CD14-positive monocyte (primary cell): ENCODE measurements at regions of chr17 and their contacts with region 1.

Region 1: DNA sequence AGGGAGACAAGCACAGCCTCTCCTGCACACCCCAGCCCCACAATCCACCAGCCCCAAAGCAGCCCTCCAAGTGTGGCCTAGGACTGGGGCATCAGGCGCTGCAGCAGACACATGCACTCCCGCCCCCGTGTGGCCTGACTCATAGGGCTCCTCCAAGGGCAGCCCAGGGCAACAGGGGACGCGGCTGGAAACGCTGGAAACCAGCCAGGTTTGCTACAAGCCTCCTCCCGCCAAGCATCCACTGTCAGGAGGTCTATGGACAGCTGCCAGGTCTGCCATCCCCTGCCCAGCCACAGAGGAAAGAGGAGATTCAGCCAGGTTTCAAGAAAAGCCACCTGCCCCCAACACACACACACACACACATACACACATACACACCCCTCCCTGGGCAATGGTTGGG is 25.8 kb downstream of the SRCIN1 start:
- DNase-seq: no peak
- H3K4me3 ChIP-seq: no peak overlapping the region
- H3K4me3 Mint-ChIP-seq: peak overlapping the region in 1 of 2 donors; percentile 84
- H3K27ac ChIP-seq: no peak overlapping the region
- H3K27ac Mint-ChIP-seq: peak overlapping the region in 1 of 7 donors; percentile 38
- H3K4me1 ChIP-seq: peaks cover 0 to 3% of the 10 kb centered on the region in 2 donors
- H3K4me1 Mint-ChIP-seq: peaks cover 6% of the 10 kb centered on the region
- H3K27me3 ChIP-seq: peaks cover 61 to 96% of the 10 kb centered on the region in 2 donors
- H3K27me3 Mint-ChIP-seq: peaks cover 85 to 97% (median 91%) of the 10 kb centered on the region in 3 donors
- CTCF ChIP-seq: no peak

Region 2: DNA sequence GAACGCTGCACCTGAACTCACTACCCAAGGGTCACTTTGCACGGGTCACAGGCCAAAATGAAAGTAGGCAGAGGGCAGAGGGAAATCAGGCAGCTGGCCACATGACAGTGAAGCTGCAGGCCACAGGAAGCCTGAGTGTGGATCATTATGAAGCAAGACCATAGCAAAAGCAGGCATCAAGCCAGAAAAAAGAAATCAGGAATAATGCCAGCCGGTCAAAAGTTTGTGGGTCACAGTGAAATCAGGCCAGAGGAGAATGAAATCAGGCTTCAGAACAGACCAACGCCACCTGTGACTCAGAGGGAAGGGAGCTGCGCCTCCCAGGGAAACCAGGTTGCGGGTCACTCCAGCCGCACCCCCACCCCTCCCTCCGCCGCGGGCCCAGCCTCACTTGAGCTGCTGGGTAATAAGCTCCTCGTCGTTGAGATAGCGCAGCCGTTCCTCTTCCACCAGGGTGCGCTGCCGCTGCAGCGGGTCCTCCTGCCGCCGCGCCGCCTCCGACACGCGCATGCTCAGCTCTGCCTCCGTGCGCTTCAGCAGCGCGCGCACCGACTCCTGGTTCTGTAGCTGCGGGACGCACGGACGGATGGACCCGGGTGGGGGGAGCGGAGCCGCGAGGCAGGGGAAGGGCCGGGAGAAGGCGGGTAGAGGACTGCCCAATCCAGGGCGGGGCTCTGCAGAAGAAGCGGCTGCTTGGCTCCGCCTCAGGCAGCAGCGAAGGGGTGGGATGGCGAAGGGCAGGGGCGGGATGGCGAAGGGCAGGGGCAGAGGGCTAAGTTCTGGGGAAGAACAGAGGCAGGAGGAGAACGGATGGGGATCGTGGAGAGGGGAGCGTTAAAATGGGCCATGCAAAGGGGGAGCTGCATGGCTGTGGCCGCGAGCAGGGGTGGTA is 21.9 kb before region 1 on chr17:
- intact Hi-C with region 1: loop called in 1 of 2 experiments (anchors 2 kb)
- DNase-seq: peak; percentile 88 to 93 (median 88)
- H3K4me3 ChIP-seq: peak overlapping the region; percentile 3 to 75 (median 25)
- H3K4me3 Mint-ChIP-seq: peak overlapping the region; percentile 81 to 90
- H3K27ac ChIP-seq: no peak overlapping the region
- H3K27ac Mint-ChIP-seq: peak overlapping the region in 4 of 7 donors; percentile 19 to 83 (median 46)
- H3K4me1 ChIP-seq: peaks cover 38 to 48% of the 10 kb centered on the region in 2 donors
- H3K4me1 Mint-ChIP-seq: peaks cover 45% of the 10 kb centered on the region
- H3K27me3 ChIP-seq: peaks cover 26 to 43% of the 10 kb centered on the region in 2 donors
- H3K27me3 Mint-ChIP-seq: peaks cover 44 to 75% (median 47%) of the 10 kb centered on the region in 3 donors
- CTCF ChIP-seq: peak; percentile 81